CD14-positive monocyte (primary cell): ENCODE measurements at regions of chr19 and their contacts with region 1.

Region 1: GRCh38 chr19:18521885-18522624 is at the start of gene ELL:
- DNase-seq: peak; percentile 100
- H3K4me3 ChIP-seq: peak within 1 kb of the TSS; percentile 73 to 98 (median 84)
- H3K4me3 Mint-ChIP-seq: peak within 1 kb of the TSS; percentile 95 to 100
- H3K27ac ChIP-seq: peak within 1 kb of the TSS; percentile 87 to 97
- H3K27ac Mint-ChIP-seq: peak within 1 kb of the TSS; percentile 92 to 100 (median 97)
- H3K4me1 ChIP-seq: peaks cover 34 to 35% of the 10 kb centered on the region in 2 donors
- H3K4me1 Mint-ChIP-seq: peaks cover 43% of the 10 kb centered on the region
- H3K27me3 ChIP-seq: no peaks in the 10 kb centered on the region
- H3K27me3 Mint-ChIP-seq: peaks cover 0 to 2% (median 0%) of the 10 kb centered on the region in 3 donors
- CTCF ChIP-seq: no peak
- polyA plus RNA-seq, gene ELL: 12.2 to 35.3 (median 12.6) TPM

Region 2: GRCh38 chr19:18488838-18489626 is 33.0 kb before region 1 on chr19:
- intact Hi-C with region 1: loop called in 1 of 2 experiments (anchors 5 kb)
- DNase-seq: no peak
- H3K4me3 ChIP-seq: no peak overlapping the region
- H3K4me3 Mint-ChIP-seq: no peak overlapping the region
- H3K27ac ChIP-seq: peak overlapping the region; percentile 1 to 97
- H3K27ac Mint-ChIP-seq: peak overlapping the region in 5 of 7 donors; percentile 11 to 91 (median 62)
- H3K4me1 ChIP-seq: peaks cover 48 to 71% of the 10 kb centered on the region in 2 donors
- H3K4me1 Mint-ChIP-seq: peaks cover 78% of the 10 kb centered on the region
- H3K27me3 ChIP-seq: no peaks in the 10 kb centered on the region
- H3K27me3 Mint-ChIP-seq: peaks cover 0 to 8% (median 0%) of the 10 kb centered on the region in 3 donors
- CTCF ChIP-seq: peak; percentile 4

Region 3: GRCh38 chr19:18532168-18532890 is 10.3 kb after region 1 on chr19:
- intact Hi-C with region 1: no loop called
- DNase-seq: no peak
- H3K4me3 ChIP-seq: no peak overlapping the region
- H3K4me3 Mint-ChIP-seq: no peak overlapping the region
- H3K27ac ChIP-seq: no peak overlapping the region
- H3K27ac Mint-ChIP-seq: peak overlapping the region in 2 of 7 donors; percentile 27 to 70
- H3K4me1 ChIP-seq: no peaks in the 10 kb centered on the region
- H3K4me1 Mint-ChIP-seq: no peaks in the 10 kb centered on the region
- H3K27me3 ChIP-seq: no peaks in the 10 kb centered on the region
- H3K27me3 Mint-ChIP-seq: no peaks in the 10 kb centered on the region
- CTCF ChIP-seq: no peak

Region 4: GRCh38 chr19:18557474-18558201 is 35.6 kb after region 1 on chr19 and contains the start of gene KXD1:
- intact Hi-C with region 1: loop called (anchors 1 to 5 kb)
- DNase-seq: peak; percentile 99 to 100 (median 100)
- H3K4me3 ChIP-seq: peak within 1 kb of the TSS; percentile 75 to 96 (median 95)
- H3K4me3 Mint-ChIP-seq: peak within 1 kb of the TSS; percentile 88 to 90
- H3K27ac ChIP-seq: peak within 1 kb of the TSS; percentile 69 to 97
- H3K27ac Mint-ChIP-seq: peak within 1 kb of the TSS; percentile 93 to 97 (median 95)
- H3K4me1 ChIP-seq: peaks cover 14 to 17% of the 10 kb centered on the region in 2 donors
- H3K4me1 Mint-ChIP-seq: peaks cover 16% of the 10 kb centered on the region
- H3K27me3 ChIP-seq: no peaks in the 10 kb centered on the region
- H3K27me3 Mint-ChIP-seq: peaks cover 0 to 3% (median 0%) of the 10 kb centered on the region in 3 donors
- CTCF ChIP-seq: no peak
- polyA plus RNA-seq, gene KXD1: 74.4 to 194 (median 87.9) TPM

Region 5: GRCh38 chr19:18636183-18636968 is 114.3 kb after region 1 on chr19:
- intact Hi-C with region 1: loop called (anchors 1 to 2 kb)
- DNase-seq: peak; percentile 95 to 97 (median 97)
- H3K4me3 ChIP-seq: peak overlapping the region; percentile 65 to 92 (median 90)
- H3K4me3 Mint-ChIP-seq: peak overlapping the region; percentile 85 to 90
- H3K27ac ChIP-seq: peak overlapping the region; percentile 66 to 82
- H3K27ac Mint-ChIP-seq: peak overlapping the region; percentile 76 to 99 (median 92)
- H3K4me1 ChIP-seq: peaks cover 11 to 26% of the 10 kb centered on the region in 2 donors
- H3K4me1 Mint-ChIP-seq: peaks cover 25% of the 10 kb centered on the region
- H3K27me3 ChIP-seq: peaks cover 0 to 3% of the 10 kb centered on the region in 2 donors
- H3K27me3 Mint-ChIP-seq: peaks cover 5 to 18% (median 16%) of the 10 kb centered on the region in 3 donors
- CTCF ChIP-seq: no peak